Activated T-helper 1 cell treated with anti-CD3 and anti-CD28 coated beads, Interleukin-12 subunit alpha, Interleukin-12 subunit beta, Interleukin-2, Interleukin-4 antibody, amounts not matched to agents 30 ng/mL and 10 ng/mL and 1 ng/mL, durations not matched to agents 14 hours and 24 hours and 36 hours (primary cell): ENCODE measurements at regions of chr10 and their contacts with region 1.

Region 1: DNA sequence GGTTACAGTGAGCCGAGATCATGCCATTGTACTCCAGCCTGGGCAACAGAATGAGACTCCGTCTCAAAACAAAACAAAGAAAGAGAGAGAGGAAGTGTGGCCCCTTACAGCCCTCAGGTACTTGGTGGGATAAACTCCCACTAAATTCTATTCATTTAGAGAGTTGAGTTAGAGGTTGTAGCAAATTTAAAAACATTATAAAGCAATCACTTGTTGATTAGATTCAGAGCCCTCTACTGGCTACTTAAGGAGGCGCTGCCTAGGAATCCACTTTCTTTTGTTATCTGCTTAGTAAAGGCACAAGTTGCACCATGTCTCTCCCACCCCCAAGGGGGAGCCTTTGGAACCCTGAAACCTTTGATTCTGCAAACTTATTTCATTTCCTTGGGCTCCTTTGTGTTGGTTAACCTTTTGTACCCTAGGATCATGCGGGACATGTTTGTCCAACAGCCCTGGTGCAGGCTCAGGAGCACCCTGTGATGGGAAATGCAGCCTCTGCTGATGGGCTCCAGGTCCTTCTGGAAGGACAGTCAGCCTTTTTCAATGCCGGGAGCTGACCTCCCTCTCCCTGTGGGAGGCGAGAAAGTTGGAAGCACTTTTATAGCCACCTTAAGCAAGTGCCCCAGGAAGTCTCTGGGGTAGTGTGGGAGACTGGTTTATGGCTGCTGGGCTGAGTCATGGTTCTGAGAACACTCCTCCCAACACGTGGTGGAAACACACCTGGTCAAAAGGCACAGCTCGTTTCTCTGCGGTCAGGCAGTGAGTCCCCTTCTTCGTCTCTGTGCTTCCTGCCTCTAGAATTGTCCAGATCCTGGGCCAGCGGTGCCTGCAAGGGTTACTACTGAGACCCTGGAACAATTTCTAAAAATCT is 2.3 kb downstream of the HKDC1 start:
- DNase-seq: peak; percentile 81
- H3K4me3 Mint-ChIP-seq: peak overlapping the region; percentile 71
- H3K27ac Mint-ChIP-seq: peak overlapping the region; percentile 96
- H3K4me1 Mint-ChIP-seq: peaks cover 49% of the 10 kb centered on the region
- H3K27me3 Mint-ChIP-seq: no peaks in the 10 kb centered on the region

Region 2: DNA sequence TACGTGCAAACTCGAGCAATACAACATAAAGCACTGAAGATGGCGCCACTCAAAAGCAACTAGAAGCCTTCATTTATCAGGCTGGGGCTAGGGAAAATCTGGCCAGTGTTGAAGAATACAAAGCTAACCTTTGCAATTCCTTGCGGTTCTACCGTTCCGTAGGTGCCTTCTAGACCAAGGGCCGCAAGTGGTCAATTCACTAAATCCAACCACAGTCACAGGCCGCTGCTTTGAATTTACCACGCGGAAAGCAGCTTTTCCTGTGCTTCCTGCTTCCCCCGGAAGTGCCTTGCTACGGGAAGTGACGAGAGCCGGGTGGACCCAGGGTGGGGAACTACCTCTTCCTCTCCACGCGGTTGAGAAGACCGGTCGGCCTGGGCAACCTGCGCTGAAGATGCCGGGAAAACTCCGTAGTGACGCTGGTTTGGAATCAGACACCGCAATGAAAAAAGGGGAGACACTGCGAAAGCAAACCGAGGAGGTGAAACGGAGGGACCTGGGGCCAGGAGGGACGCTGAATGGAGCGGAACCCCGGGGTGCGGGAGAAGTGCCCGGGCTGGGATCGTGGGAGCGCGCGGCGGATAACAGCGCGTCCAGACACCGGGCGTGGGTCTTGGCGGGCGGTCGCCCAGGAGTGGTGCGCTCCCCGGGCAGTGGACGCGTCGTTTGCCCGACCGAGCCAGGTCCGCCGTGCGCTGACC is 266.4 kb before region 1 on chr10 and contains the start of gene DDX21:
- intact Hi-C with region 1: loop called (anchors 1 kb)
- DNase-seq: peak; percentile 87
- H3K4me3 Mint-ChIP-seq: peak within 1 kb of the TSS; percentile 99
- H3K27ac Mint-ChIP-seq: peak within 1 kb of the TSS; percentile 99
- H3K4me1 Mint-ChIP-seq: peaks cover 25% of the 10 kb centered on the region
- H3K27me3 Mint-ChIP-seq: no peaks in the 10 kb centered on the region
- total RNA-seq, gene DDX21: 267 and 278 TPM in 2 replicates

Region 3: GRCh38 chr10:68997211-68997610 is 225.2 kb before region 1 on chr10:
- intact Hi-C with region 1: loop called (anchors 2 kb)
- DNase-seq: no peak
- H3K4me3 Mint-ChIP-seq: peak overlapping the region; percentile 16
- H3K27ac Mint-ChIP-seq: peak overlapping the region; percentile 86
- H3K4me1 Mint-ChIP-seq: peaks cover 35% of the 10 kb centered on the region
- H3K27me3 Mint-ChIP-seq: no peaks in the 10 kb centered on the region

Region 4: DNA sequence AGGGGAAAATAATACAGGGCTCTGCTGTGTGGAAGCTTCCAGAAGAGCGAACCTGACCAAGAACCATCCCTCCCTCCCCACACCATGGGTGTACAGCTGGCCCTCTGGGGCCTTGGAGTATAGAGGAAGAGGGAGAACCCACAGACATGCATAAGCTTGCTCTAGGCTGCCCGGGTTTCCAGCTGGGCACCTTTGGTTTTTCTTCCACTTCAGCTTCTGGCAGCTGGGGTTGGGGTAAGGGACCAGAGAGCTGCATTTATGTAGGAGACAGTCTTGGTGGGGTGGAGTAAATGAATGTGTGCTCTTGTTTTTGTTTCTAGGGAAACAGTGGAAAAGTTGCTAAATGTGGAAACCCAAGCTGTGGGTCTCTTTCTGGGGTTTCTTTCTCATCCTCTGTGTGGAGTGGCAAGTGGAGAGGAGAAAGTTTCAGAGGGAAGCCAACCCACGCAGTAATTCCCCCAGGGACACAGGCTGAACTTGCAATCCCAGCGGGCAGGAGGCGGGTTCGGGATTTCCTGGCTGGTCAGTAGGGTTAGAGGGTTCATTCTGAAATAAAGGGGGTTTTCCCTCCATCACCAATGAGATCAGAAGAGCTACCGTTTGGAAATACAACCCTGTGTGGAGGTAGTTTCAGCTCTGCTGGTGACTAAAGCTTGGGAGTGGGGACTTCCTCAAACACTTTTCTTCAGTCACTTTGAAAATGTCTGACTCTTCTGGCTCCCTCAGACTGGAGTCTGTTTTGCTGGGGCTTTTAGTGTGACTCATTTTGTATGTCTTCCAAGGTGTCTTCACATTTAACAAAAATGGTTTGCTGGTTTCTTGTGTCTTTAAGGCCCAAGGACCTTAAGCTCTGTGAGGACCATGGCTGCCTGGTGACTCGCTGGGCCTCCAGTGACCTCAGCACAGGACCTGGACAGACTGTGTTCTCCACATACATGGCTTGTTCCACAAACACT is 156.7 kb before region 1 on chr10:
- intact Hi-C with region 1: loop called (anchors 1 kb)
- DNase-seq: peak; percentile 39
- H3K4me3 Mint-ChIP-seq: peak overlapping the region; percentile 62
- H3K27ac Mint-ChIP-seq: peak overlapping the region; percentile 99
- H3K4me1 Mint-ChIP-seq: peaks cover 51% of the 10 kb centered on the region
- H3K27me3 Mint-ChIP-seq: no peaks in the 10 kb centered on the region

Region 5: DNA sequence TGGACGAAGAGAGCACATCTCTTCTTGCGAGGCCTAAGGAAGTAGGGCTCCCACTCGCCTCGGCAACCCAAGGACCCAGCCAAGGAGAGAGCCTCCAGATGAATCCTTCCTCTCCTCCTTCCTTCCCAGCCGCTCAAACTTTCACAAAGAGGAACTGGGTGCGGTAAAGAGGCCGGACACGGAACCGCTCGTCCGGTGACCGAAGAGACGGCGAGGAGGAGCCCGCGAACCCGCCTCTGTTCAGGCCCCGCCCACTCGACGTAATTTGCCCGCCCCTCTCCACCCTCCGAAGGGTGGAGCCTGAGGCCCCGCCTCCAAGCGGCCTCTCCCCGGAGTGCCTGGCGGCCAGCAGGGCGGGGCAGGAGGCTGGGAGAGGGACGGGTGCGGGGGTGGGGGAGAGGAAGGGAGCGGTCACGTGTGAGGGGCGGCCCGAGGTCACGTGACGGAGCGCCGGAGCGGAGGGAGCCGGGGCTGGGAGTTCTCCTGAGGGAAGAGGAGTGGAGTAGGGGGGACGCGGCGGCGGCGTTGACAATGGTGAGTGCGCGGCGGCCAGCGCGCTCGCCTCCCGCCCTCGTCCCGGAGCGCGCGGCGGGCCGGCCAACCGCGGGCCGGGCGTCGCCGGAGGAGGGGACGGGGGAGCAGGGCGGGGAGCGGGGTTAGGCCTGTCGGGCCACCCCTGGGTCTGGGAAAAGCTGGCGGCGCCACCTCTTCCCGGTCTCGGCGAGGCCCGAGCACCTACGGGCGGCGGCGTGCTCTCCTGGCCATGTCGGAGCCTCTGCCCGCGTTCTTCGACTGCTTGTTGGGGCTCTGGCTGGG is 98.4 kb before region 1 on chr10 and contains the start of gene VPS26A:
- intact Hi-C with region 1: loop called (anchors 1 kb)
- DNase-seq: peak; percentile 99
- H3K4me3 Mint-ChIP-seq: peak within 1 kb of the TSS; percentile 87
- H3K27ac Mint-ChIP-seq: peak within 1 kb of the TSS; percentile 88
- H3K4me1 Mint-ChIP-seq: peaks cover 21% of the 10 kb centered on the region
- H3K27me3 Mint-ChIP-seq: no peaks in the 10 kb centered on the region
- total RNA-seq, gene VPS26A: 24.7 and 24.8 TPM in 2 replicates

Region 6: DNA sequence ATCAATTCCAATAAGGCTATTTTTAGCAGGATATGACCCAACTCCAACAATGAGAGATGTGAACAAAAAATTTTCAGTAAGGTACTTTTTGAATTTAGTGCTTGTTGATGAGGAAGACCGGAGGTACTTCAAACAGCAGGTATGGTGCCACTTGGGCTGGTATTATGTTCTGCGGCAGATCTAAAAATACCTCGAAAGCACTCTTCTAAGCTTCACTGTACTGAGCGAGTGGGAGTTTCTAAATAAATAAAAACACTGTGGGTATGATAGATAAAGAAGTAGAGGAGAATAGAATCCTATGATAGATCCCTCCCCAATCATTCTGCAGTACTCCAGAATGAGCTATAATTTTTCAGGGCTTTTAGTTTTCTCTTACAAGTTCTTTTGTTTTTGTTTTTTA is 53.9 kb before region 1 on chr10:
- intact Hi-C with region 1: no loop called
- DNase-seq: no peak
- H3K4me3 Mint-ChIP-seq: no peak overlapping the region
- H3K27ac Mint-ChIP-seq: no peak overlapping the region
- H3K4me1 Mint-ChIP-seq: no peaks in the 10 kb centered on the region
- H3K27me3 Mint-ChIP-seq: no peaks in the 10 kb centered on the region

Region 7: GRCh38 chr10:69237528-69238159 is 15.3 kb after region 1 on chr10:
- intact Hi-C with region 1: loop called (anchors 1 kb)
- DNase-seq: peak; percentile 78
- H3K4me3 Mint-ChIP-seq: no peak overlapping the region
- H3K27ac Mint-ChIP-seq: no peak overlapping the region
- H3K4me1 Mint-ChIP-seq: peaks cover 15% of the 10 kb centered on the region
- H3K27me3 Mint-ChIP-seq: peaks cover 2% of the 10 kb centered on the region

Region 8: GRCh38 chr10:69392481-69393000 is 170.1 kb after region 1 on chr10:
- intact Hi-C with region 1: loop called (anchors 1 kb)
- DNase-seq: peak; percentile 74
- H3K4me3 Mint-ChIP-seq: no peak overlapping the region
- H3K27ac Mint-ChIP-seq: peak overlapping the region; percentile 63
- H3K4me1 Mint-ChIP-seq: peaks cover 39% of the 10 kb centered on the region
- H3K27me3 Mint-ChIP-seq: no peaks in the 10 kb centered on the region